SK-N-SH (cell line): ENCODE measurements at regions of chr12 and their contacts with region 1.

Region 1: GRCh38 chr12:107402041-107403022 is 283.3 kb upstream of the PWP1 start:
- DNase-seq: peak; percentile 64
- H3K4me3 ChIP-seq: no peak overlapping the region
- H3K27ac ChIP-seq: peak overlapping the region in 1 of 2 experiments; percentile 34; a peak in 2 of 4 replicates
- H3K4me1 ChIP-seq: peaks cover 0 to 43% of the 10 kb centered on the region in 2 experiments; a peak in 3 of 4 replicates
- H3K27me3 ChIP-seq: no peaks in the 10 kb centered on the region
- CTCF ChIP-seq: peak; percentile 71
- EP300 ChIP-seq: no peak
- RAD21 ChIP-seq: peak; percentile 84

Region 2: DNA sequence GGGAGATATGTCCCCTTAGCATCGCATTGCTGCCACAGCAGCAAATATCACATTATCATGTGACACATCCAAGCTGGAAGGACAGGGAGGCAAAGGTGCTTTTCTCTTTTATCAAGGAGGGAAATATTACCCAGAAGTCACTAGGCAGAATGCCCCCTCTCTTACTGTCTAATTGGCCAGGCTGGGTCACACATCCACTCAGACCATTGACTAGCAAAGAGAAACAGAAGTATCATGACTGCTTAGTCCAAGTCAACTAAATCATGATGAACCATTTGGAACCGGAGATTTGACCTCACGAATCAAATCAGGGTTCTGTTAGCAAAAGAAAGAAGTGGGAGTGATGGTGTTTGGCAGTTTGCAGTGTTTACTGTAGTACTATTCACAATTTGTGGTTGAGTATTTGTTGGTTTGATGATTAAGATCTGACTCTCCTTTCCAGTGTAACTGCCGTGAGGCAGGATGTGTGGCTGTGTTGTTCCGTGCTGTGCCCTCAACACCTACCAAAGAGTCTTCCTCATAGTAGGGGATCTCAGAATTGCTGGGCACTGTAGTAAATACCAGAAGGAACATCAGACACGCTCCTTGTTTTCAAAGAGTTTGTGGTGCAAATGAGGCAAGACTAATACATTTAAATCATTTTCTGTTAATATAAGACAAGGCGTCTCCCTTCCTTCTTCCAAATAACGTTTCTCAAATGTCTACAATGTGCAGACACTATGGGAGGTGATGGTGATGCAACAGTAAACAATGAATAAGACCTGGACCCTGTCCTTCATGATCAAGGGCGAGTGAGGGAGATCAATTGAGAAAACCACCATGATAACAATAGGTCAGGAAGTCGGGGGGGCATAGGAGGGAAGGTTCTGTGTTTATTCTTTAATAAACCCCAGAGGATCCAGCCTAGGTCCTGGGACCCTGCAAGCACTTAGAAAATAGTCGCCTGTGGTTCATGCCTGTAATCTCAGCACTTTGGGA is 114.6 kb before region 1 on chr12:
- CTCF ChIA-PET with region 1: no interaction called
- POLR2A ChIA-PET with region 1: no interaction called
- DNase-seq: no peak
- H3K4me3 ChIP-seq: no peak overlapping the region
- H3K27ac ChIP-seq: no peak overlapping the region
- H3K4me1 ChIP-seq: no peaks in the 10 kb centered on the region
- H3K27me3 ChIP-seq: no peaks in the 10 kb centered on the region
- CTCF ChIP-seq: no peak
- EP300 ChIP-seq: no peak
- RAD21 ChIP-seq: no peak

Region 3: GRCh38 chr12:107317751-107318613 is 84.3 kb before region 1 on chr12:
- CTCF ChIA-PET with region 1: interaction called, 14 read pairs
- POLR2A ChIA-PET with region 1: interaction called, 4 read pairs
- DNase-seq: peak; percentile 96
- H3K4me3 ChIP-seq: peak overlapping the region; percentile 46 to 69
- H3K27ac ChIP-seq: no peak overlapping the region
- H3K4me1 ChIP-seq: peaks cover 0 to 24% of the 10 kb centered on the region in 2 experiments; a peak in 1 of 4 replicates
- H3K27me3 ChIP-seq: peaks cover 17% of the 10 kb centered on the region; the same call in 1 of the 2 replicates
- CTCF ChIP-seq: no peak; the same call in 1 of the 2 replicates
- EP300 ChIP-seq: no peak
- RAD21 ChIP-seq: peak; percentile 43

Region 4: DNA sequence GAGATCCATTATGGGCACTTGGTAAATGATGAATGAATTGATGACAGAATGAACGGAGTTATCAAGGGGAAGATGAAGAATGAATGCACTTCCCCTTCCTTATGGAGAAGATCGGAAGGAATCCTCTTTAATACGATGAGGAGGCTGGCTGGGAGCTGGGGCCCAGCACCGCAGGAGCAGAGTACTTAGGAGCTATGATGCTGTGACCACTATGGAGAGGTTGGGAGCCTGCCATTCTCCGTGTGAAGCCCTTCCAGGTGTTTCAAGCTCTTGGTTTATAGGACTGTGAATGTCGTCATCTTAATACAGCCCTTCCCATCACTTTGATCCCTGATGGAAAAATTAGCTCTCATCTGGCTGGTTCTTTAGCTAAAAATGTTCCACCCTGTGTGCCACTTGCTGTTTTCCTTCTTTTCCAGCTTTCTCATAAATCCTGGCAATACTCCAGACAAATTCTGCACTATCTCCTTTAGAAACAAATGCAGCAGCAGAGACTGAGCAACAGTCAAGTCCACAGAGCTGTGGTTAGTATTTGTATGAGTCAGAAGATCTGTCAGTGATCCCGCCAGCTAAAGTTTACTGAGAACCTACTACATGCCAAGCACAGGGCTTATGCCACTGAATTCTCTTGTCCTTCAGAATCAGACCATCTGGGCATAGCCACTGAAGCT is 45.9 kb before region 1 on chr12:
- CTCF ChIA-PET with region 1: interaction called, 10 read pairs
- POLR2A ChIA-PET with region 1: no interaction called
- DNase-seq: no peak
- H3K4me3 ChIP-seq: no peak overlapping the region
- H3K27ac ChIP-seq: no peak overlapping the region
- H3K4me1 ChIP-seq: peaks cover 0 to 3% of the 10 kb centered on the region in 2 experiments; a peak in 1 of 4 replicates
- H3K27me3 ChIP-seq: no peaks in the 10 kb centered on the region
- CTCF ChIP-seq: no peak
- EP300 ChIP-seq: no peak
- RAD21 ChIP-seq: no peak

Region 5: DNA sequence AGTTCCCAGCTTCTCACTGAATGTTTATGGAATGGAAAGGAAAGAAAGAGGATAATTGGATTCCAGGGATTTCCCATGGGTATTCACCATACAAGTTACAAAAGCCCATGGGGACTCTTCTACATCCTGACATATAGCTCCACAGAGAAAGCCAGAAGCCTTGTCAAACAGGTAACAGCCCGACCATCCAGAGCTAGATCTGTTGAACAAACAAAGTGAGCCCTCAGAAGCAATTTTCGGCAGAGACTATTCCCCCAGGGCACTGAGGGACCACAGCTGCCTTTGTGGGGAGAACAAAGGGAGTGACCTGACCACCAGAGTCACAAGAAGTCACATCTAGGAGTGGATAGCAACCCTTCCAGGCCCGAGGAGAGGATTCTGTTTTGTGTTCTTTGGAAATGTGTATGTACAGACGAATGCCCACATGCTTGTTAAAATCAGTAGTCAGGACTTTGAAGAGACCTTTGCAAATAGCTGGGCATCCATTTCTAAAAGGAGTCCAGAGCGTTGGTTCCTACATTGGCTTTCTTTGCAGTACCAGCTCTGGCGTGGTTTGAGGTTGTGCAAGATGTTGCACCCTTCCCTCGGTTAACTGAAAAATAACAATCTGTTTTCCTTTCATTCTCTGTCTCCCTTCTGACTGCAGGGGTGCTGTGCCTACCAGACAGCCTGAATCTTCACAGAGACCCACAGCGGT is 117.7 kb after region 1 on chr12:
- CTCF ChIA-PET with region 1: no interaction called
- POLR2A ChIA-PET with region 1: no interaction called
- DNase-seq: no peak
- H3K4me3 ChIP-seq: no peak overlapping the region
- H3K27ac ChIP-seq: no peak overlapping the region
- H3K4me1 ChIP-seq: peaks cover 0 to 11% of the 10 kb centered on the region in 2 experiments; a peak in 1 of 4 replicates
- H3K27me3 ChIP-seq: no peaks in the 10 kb centered on the region
- CTCF ChIP-seq: no peak
- EP300 ChIP-seq: no peak
- RAD21 ChIP-seq: no peak